Heart left ventricle (tissue), 16 donors: ENCODE measurements at regions of chr17 and their contacts with region 1.

Region 1: DNA sequence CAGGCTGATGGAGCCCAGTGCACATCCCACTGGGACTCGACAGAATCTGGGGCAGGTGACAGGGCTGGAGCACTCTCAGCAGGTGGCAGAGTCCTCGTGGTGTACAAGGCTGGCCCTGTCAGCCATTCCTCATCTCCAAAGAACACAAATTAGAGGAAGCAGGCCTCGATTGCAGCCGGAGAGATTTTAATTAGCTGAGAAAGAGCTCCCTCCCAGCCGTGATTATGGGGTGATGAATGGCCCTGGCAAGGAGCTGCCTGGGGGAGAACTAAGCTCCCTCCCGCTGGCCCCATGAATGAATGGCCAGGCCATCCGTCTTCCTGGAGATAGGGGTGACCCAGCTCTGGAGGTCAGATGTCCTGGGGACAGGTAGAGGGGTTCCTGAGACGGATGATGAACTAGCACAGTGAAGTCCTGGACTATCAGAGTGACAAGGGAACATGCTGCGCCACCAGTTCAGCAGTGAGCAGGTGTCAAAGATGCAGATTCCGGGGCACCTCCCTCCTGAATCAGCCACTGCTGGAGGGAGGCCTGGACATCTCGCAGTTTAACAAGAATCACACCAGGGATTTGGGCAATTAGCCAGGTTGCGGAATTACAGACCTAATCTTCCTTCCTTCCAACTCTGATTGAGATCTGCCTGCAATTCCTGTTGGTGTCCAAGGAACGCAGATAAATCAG is 35.5 kb downstream of the PIMREG start:
- DNase-seq: no peak
- ATAC-seq: no peak
- H3K4me3 ChIP-seq: no peak overlapping the region
- H3K27ac ChIP-seq: no peak overlapping the region
- H3K4me1 ChIP-seq: no peaks in the 10 kb centered on the region
- H3K27me3 ChIP-seq: peaks cover 0 to 17% (median 0%) of the 10 kb centered on the region in 9 donors
- CTCF ChIP-seq: no peak
- POLR2A ChIP-seq: no peak

Region 2: DNA sequence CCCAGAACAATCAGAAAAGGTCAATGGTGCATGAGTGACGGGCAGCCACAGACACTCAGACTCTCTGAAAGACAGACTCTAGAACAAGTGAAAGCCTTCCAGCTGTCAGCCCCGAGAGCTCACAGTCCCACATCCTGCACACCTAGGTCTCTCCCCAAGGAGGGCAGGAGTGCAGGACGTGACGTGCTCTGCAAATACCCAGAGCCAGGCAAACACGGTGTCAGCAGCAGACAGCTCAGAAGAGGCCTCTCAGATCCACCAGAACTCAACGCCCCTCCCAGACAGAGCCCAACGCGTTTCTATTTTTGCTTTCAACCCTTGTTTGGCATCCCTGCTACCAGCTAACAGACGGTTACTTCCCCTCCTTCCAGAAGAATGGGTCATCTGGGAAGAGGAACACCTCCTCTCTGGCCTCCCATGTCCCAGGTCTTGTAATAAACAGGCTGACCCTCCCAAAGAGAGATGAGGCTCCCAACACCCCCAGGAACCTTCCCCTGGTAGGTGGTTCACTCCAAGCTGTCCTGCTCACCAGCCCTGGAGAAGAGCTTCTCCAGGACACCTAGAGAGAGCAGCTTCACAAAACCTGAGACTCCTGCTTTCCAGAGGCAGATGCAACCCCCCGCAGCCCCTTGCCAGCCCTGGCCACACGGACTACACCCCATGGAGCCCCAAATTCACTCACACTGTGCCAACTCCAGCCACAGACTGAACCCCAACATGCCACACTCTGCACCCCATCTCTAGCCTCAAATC is 69.0 kb after region 1 on chr17:
- intact Hi-C with region 1: loop called in 4 of 10 experiments (anchors 5 to 10 kb)
- DNase-seq: peak in 1 of 5 donors; percentile 47
- ATAC-seq: peak; percentile 71 to 84 (median 78)
- H3K4me3 ChIP-seq: no peak overlapping the region
- H3K27ac ChIP-seq: peak overlapping the region in 1 of 12 donors; percentile 78
- H3K4me1 ChIP-seq: peaks cover 0 to 13% (median 7%) of the 10 kb centered on the region in 12 donors
- H3K27me3 ChIP-seq: peaks cover 0 to 16% (median 0%) of the 10 kb centered on the region in 9 donors
- CTCF ChIP-seq: no peak
- POLR2A ChIP-seq: no peak

Region 3: DNA sequence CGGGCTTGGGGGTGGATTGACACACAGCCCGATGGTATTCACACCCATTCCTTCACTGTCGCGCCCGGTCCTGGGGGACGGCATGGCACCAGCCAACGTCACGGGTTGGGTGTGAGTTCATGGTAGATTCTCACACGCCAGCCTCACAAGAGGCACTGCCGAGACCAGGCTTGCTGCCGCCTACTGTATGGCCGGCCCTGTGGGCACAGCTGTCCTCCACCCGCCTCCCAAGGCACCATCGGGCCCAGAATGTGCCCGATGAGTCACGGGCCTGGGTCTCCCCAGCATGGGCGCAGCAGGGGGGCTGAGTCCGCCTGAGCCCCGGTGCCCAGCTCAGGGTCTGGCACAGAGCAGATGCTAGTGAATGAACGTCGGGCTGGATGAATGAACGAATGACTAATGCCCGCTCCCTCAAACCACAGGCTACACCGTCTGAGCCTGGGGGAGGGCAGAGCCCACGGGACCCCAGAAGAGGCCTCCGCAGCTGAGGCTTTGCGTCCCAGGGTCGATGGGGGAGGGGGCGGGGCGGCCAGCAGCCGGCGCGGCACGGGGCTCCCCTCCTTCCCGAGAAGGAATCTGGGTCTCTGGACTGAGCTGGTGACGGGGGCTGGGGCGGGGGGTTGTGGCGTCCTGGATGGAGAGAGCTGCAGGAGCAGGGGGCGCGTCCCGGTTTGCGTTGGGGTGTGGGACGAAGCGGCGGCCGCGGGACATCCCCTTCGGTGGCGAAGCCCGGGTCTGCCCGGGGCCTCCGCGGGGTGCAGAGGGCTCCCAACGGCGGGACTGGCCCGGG is 75.8 kb after region 1 on chr17:
- intact Hi-C with region 1: loop called in 4 of 10 experiments (anchors 5 to 10 kb)
- DNase-seq: no peak
- ATAC-seq: peak in 3 of 4 donors; percentile 49 to 54 (median 53)
- H3K4me3 ChIP-seq: peak overlapping the region; percentile 10 to 63 (median 48)
- H3K27ac ChIP-seq: peak overlapping the region in 1 of 12 donors; percentile 44
- H3K4me1 ChIP-seq: peaks cover 0 to 19% (median 12%) of the 10 kb centered on the region in 12 donors
- H3K27me3 ChIP-seq: peaks cover 6 to 40% (median 17%) of the 10 kb centered on the region in 9 donors
- CTCF ChIP-seq: no peak
- POLR2A ChIP-seq: no peak

Region 4: GRCh38 chr17:6748617-6749016 is 268.9 kb after region 1 on chr17:
- intact Hi-C with region 1: no loop called
- DNase-seq: no peak
- ATAC-seq: no peak
- H3K4me3 ChIP-seq: no peak overlapping the region
- H3K27ac ChIP-seq: no peak overlapping the region
- H3K4me1 ChIP-seq: peaks cover 0 to 31% (median 18%) of the 10 kb centered on the region in 12 donors
- H3K27me3 ChIP-seq: no peaks in the 10 kb centered on the region
- CTCF ChIP-seq: no peak
- POLR2A ChIP-seq: no peak